ENCODE measurements at regions of chr13 and their contacts with region 1.

Region 1: GRCh38 chr13:36858290-36858689 is 39.3 kb downstream of the RFXAP start:
- DNase-seq: peak; percentile 73
- ATAC-seq: peak; percentile 94
- H3K4me3 ChIP-seq: no peak overlapping the region
- H3K27ac ChIP-seq: no peak overlapping the region
- H3K4me1 ChIP-seq: peaks cover 8% of the 10 kb centered on the region
- H3K27me3 ChIP-seq: no peaks in the 10 kb centered on the region
- CTCF ChIP-seq: peak; percentile 57

Region 2: GRCh38 chr13:36795463-36795862 is 62.8 kb before region 1 on chr13:
- CTCF ChIA-PET with region 1: no interaction called
- POLR2A ChIA-PET with region 1: no interaction called
- intact Hi-C with region 1: no loop called
- DNase-seq: no peak
- ATAC-seq: no peak
- H3K4me3 ChIP-seq: no peak overlapping the region
- H3K27ac ChIP-seq: no peak overlapping the region
- H3K4me1 ChIP-seq: no peaks in the 10 kb centered on the region
- H3K27me3 ChIP-seq: no peaks in the 10 kb centered on the region
- CTCF ChIP-seq: no peak

Region 3: DNA sequence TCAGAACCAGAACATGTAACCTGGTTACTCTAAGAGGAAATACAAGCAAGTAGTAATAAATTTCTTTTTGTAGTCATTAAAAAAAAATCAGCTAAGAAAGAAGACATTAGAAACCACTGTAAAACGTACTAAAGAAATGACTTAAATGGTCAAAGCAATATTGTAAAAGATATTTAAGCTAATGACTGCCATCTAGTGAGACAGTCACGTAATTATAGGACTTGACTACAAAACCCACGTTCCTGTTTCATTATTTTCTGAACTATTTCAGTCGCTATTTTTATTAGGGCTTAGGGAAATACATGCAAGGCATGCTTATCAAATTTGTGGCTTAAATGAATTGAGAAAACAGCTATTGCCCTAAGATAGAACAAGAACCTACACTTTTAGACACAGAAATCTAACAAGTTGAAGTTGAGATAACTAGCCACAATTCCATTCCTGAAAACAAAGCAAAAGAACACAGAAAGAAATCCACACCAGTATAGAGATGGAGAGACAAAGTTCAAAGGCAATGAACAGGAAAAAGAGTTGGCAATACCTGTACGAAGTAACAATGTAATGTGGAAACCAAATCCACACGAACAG is 123.0 kb after region 1 on chr13:
- CTCF ChIA-PET with region 1: interaction called, 16 read pairs
- POLR2A ChIA-PET with region 1: no interaction called
- intact Hi-C with region 1: loop called (anchors 1 kb)
- DNase-seq: peak; percentile 62
- ATAC-seq: peak; percentile 35
- H3K4me3 ChIP-seq: no peak overlapping the region
- H3K27ac ChIP-seq: no peak overlapping the region
- H3K4me1 ChIP-seq: no peaks in the 10 kb centered on the region
- H3K27me3 ChIP-seq: no peaks in the 10 kb centered on the region
- CTCF ChIP-seq: peak; percentile 67

Region 4: GRCh38 chr13:37068962-37069361 is 210.7 kb after region 1 on chr13:
- CTCF ChIA-PET with region 1: interaction called, 4 read pairs
- POLR2A ChIA-PET with region 1: no interaction called
- intact Hi-C with region 1: loop called (anchors 2 kb)
- DNase-seq: peak; percentile 25
- ATAC-seq: peak; percentile 60
- H3K4me3 ChIP-seq: no peak overlapping the region
- H3K27ac ChIP-seq: no peak overlapping the region
- H3K4me1 ChIP-seq: 0 out of 2 replicates have a peak, but pooled peaks cover 4% of the 10 kb centered on the region
- H3K27me3 ChIP-seq: no peaks in the 10 kb centered on the region
- CTCF ChIP-seq: peak; percentile 46; the same call in 1 of the 2 replicates

Region 5: DNA sequence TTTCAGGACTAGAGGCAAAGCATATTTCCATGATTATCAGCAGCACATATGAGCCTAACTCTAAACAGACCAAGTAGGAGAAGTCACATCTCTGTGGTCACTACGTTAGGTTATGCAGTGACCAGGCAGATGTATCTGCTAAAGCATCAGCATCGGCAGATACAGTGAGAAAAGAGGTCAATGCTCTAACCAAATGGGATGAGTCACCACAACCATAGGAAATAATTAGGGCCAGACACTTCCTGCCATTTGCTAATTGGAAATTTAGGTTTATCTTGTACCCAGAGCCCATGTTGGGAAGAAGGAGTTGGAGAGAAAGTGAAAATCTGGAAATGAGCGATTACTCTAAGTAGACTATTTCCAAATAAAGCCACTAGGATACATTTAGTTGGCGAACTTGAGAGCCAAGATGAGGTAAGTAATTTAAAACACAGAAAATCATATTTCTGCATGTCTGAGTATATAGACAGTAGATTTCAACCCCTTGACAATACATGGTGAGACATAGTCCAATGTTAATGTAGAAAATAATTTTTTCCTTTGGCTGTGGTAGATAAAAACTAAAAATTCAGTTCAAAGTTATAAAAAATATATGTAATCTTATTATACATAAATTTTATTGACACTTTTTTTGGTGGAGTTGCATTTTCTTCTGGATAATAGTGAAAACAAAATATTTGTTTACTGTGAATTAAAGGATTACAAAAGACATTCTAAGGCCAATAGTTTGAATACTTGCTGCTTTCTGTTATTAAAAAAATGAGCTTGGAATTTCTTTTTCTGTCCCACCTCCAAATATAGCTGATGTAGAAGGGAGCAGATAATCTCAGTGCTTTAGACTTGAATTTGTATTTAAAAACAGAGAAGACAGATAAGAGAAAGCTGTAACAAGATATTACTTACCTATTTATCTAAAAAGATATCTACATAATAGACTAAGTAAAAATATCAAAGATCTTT is 351.6 kb after region 1 on chr13:
- CTCF ChIA-PET with region 1: no interaction called
- POLR2A ChIA-PET with region 1: no interaction called
- intact Hi-C with region 1: no loop called
- DNase-seq: no peak
- ATAC-seq: no peak
- H3K4me3 ChIP-seq: no peak overlapping the region
- H3K27ac ChIP-seq: no peak overlapping the region
- H3K4me1 ChIP-seq: no peaks in the 10 kb centered on the region
- H3K27me3 ChIP-seq: no peaks in the 10 kb centered on the region
- CTCF ChIP-seq: no peak